ENCODE measurements at regions of chr12 and their contacts with region 1.

Region 1: DNA sequence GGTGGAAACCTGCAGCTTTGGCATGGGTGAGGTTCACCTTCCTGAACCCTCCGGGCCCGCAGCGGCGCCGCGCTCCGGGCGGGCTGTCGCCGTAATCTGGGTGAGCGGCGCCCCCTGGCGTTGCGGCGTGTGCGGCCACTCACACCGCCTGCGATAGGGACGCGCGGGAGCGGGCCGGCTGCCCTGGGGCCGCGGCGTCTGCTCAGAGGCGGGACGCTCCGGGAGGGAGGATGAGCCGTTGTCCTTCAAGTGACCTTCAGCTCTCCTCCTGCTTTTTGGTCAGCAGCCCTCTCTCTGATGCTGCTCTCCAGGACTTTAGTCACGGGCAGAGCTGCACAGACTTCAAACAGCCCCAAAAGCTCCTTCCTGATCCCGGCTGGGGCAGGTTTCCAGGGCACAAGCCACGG is 211.7 kb upstream of the FKBP4 start:
- DNase-seq: peak; percentile 20
- H3K4me3 ChIP-seq: no peak overlapping the region
- H3K27ac ChIP-seq: no peak overlapping the region
- H3K4me1 ChIP-seq: no peaks in the 10 kb centered on the region
- H3K27me3 ChIP-seq: peaks cover 6% of the 10 kb centered on the region in 2 experiments
- CTCF ChIP-seq: peak; percentile 78 to 85
- POLR2A ChIP-seq: no peak

Region 2: DNA sequence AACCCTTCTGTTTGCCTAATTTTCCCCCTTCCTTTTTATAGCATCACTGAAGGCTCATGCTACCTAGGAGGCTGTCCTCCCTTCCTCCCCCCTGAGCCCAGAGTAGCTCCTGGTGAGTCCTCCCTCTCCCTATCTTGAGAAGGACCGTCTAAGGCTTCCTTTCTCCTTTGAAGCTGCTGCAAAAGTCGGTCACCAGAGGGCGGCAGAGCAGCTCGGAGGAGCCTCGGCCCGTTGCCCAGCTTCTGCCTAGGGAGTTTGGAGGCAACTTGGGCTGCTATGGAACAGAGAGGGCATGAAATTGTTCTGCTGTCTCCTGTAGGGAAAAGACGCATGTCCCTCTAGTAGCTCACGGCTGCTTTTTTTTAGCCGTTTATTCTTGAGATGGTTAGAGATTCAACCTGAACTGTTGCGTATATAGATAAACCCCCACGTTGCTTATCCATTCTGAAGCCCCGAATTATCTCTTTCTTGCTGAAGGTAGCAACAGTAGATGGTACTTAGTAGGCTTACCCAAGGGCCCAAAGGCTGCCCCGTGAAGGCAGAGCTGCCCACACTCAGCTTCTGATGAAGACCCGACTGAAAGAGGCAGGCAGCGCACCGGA is 948.4 kb before region 1 on chr12:
- CTCF ChIA-PET with region 1: interaction called, 3 read pairs
- POLR2A ChIA-PET with region 1: no interaction called
- dilution Hi-C with region 1: no loop called
- intact Hi-C with region 1: loop called (anchors 5 kb)
- DNase-seq: peak; percentile 65
- H3K4me3 ChIP-seq: no peak overlapping the region
- H3K27ac ChIP-seq: no peak overlapping the region
- H3K4me1 ChIP-seq: peaks cover 5% of the 10 kb centered on the region
- H3K27me3 ChIP-seq: peaks cover 36 to 42% of the 10 kb centered on the region in 2 experiments
- CTCF ChIP-seq: peak; percentile 85 to 87
- POLR2A ChIP-seq: no peak

Region 3: GRCh38 chr12:2057041-2057794 is 525.9 kb before region 1 on chr12:
- CTCF ChIA-PET with region 1: interaction called, 8 read pairs
- POLR2A ChIA-PET with region 1: no interaction called
- dilution Hi-C with region 1: no loop called
- intact Hi-C with region 1: loop called (anchors 1 kb)
- DNase-seq: peak; percentile 34
- H3K4me3 ChIP-seq: no peak overlapping the region
- H3K27ac ChIP-seq: no peak overlapping the region
- H3K4me1 ChIP-seq: peaks cover 3% of the 10 kb centered on the region
- H3K27me3 ChIP-seq: peaks cover 36 to 43% of the 10 kb centered on the region in 2 experiments
- CTCF ChIP-seq: peak; percentile 54 to 70
- POLR2A ChIP-seq: no peak

Region 4: GRCh38 chr12:2395354-2395977 is 187.6 kb before region 1 on chr12:
- CTCF ChIA-PET with region 1: interaction called, 3 read pairs
- POLR2A ChIA-PET with region 1: no interaction called
- dilution Hi-C with region 1: no loop called
- intact Hi-C with region 1: loop called (anchors 5 kb)
- DNase-seq: peak; percentile 38
- H3K4me3 ChIP-seq: no peak overlapping the region
- H3K27ac ChIP-seq: no peak overlapping the region
- H3K4me1 ChIP-seq: no peaks in the 10 kb centered on the region
- H3K27me3 ChIP-seq: no peaks in the 10 kb centered on the region
- CTCF ChIP-seq: peak; percentile 86 to 87
- POLR2A ChIP-seq: no peak

Region 5: DNA sequence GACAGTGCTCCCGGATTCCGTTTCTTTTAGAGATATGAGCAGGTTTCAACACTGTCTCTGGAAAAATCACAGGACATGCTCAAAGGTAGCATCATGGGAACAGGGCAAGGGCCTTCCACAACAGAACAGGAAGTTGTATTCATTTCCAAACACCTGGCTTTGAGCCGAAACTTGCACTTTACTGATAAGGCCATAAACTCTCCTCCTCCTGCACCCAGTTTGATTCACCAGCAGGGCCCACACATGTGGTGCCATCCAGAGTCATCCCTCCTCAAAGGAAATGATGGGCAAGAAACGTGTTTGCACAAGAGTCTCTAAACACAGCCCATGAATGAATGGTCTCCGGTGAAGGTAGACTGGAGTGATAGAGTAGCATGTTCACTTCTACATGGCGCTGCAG is 56.7 kb before region 1 on chr12:
- CTCF ChIA-PET with region 1: no interaction called
- POLR2A ChIA-PET with region 1: no interaction called
- dilution Hi-C with region 1: no loop called
- intact Hi-C with region 1: no loop called
- DNase-seq: no peak
- H3K4me3 ChIP-seq: no peak overlapping the region
- H3K27ac ChIP-seq: no peak overlapping the region
- H3K4me1 ChIP-seq: no peaks in the 10 kb centered on the region
- H3K27me3 ChIP-seq: no peaks in the 10 kb centered on the region
- CTCF ChIP-seq: no peak
- POLR2A ChIP-seq: no peak

Region 6: DNA sequence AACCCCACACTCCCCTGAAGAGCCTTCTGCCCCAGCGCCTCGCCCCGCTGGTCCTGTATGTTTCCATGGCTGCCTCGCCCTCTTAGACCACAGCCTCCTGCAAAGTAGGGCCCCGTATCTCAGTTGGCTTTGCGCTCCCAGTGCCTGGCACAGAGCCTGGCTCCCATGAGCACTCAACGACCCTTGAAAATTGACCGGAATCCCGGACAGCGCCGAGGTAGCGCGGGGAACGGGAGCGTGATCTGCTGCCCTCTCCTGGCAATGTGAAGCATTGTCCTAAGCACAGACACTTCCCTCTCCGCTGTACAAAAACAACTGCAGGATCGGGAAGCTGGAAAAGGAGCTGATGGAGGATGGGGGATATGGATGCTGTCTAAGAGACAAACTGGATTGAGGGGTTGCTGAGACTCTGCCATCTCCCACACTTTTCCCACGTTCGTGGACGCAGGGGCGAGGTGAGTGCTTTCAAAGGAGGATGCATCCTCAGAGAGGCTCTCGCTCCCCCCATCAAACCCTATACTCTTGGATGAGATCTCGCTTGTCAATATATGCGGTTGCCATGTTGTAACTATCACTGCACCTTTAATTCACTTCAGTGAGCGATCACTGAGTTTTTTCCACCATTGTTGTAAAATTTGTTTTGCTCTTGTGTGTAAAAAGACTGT is 201.0 kb after region 1 on chr12:
- CTCF ChIA-PET with region 1: interaction called, 4 read pairs
- POLR2A ChIA-PET with region 1: no interaction called
- dilution Hi-C with region 1: no loop called
- intact Hi-C with region 1: loop called (anchors 10 kb)
- DNase-seq: peak; percentile 52
- H3K4me3 ChIP-seq: no peak overlapping the region
- H3K27ac ChIP-seq: no peak overlapping the region
- H3K4me1 ChIP-seq: no peaks in the 10 kb centered on the region
- H3K27me3 ChIP-seq: peaks cover 20 to 21% of the 10 kb centered on the region in 2 experiments
- CTCF ChIP-seq: peak; percentile 88 to 93
- POLR2A ChIP-seq: no peak

Region 7: GRCh38 chr12:3445119-3445978 is 862.3 kb after region 1 on chr12:
- CTCF ChIA-PET with region 1: no interaction called
- POLR2A ChIA-PET with region 1: no interaction called
- dilution Hi-C with region 1: no loop called
- intact Hi-C with region 1: no loop called
- DNase-seq: no peak
- H3K4me3 ChIP-seq: no peak overlapping the region
- H3K27ac ChIP-seq: no peak overlapping the region
- H3K4me1 ChIP-seq: no peaks in the 10 kb centered on the region
- H3K27me3 ChIP-seq: peaks cover 0 to 2% of the 10 kb centered on the region in 2 experiments
- CTCF ChIP-seq: no peak
- POLR2A ChIP-seq: no peak